ENCODE measurements at regions of chr6 and their contacts with region 1.

Region 1: DNA sequence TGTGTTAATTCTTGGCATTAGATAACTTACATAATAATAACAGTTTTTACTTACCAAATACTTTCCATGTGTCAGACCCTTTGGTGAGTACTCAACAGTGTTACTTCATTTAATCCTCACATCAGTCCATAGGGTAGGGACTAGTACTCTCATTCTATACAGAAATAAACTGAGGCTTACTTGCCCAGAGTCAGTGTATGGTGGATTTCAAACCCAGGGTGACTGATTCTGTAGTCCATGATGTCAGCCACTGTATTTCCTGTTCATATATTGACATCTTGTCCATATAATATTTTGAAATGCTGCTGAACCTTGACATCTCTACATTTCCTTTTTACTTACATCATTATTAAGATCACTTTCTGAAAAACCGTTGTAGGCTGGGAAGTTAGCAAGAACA is 2.5 kb upstream of the PNLDC1 start:
- DNase-seq: no peak
- H3K4me3 ChIP-seq: no peak overlapping the region
- H3K27ac ChIP-seq: no peak overlapping the region
- H3K4me1 ChIP-seq: peaks cover 0 to 2% of the 10 kb centered on the region in 2 donors
- H3K27me3 ChIP-seq: no peaks in the 10 kb centered on the region
- CTCF ChIP-seq: no peak
- POLR2A ChIP-seq: no peak

Region 2: DNA sequence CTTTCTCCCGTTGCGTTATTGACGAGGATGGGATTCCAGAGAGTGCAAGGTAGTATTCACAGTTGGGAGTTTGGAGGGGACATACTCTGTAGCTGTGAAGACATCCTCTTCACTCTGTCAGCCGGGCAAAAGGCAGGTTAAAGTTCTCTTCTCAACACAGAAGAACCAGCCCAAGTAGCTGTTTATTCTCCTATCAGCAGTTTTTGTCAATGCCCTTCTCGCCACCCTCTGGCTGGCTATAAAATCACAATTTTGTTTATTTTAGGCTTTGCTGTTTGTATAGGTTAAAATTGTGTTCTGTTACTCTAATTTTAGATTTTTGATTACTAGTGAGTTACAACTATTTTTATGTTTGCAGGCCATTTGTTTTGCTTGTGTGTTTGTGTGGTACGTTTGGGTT is 55.3 kb after region 1 on chr6:
- intact Hi-C with region 1: loop called in 1 of 2 experiments (anchors 5 kb)
- DNase-seq: no peak
- H3K4me3 ChIP-seq: no peak overlapping the region
- H3K27ac ChIP-seq: no peak overlapping the region
- H3K4me1 ChIP-seq: peaks cover 0 to 9% of the 10 kb centered on the region in 2 donors
- H3K27me3 ChIP-seq: no peaks in the 10 kb centered on the region
- CTCF ChIP-seq: peak in 4 of 6 experiments; percentile 11 to 36 (median 26)
- POLR2A ChIP-seq: no peak

Region 3: GRCh38 chr6:159874435-159874834 is 76.9 kb after region 1 on chr6:
- intact Hi-C with region 1: no loop called
- DNase-seq: peak in 3 of 7 donors; percentile 13 to 31 (median 29)
- H3K4me3 ChIP-seq: no peak overlapping the region
- H3K27ac ChIP-seq: no peak overlapping the region
- H3K4me1 ChIP-seq: no peaks in the 10 kb centered on the region
- H3K27me3 ChIP-seq: no peaks in the 10 kb centered on the region
- CTCF ChIP-seq: no peak
- POLR2A ChIP-seq: no peak

Region 4: DNA sequence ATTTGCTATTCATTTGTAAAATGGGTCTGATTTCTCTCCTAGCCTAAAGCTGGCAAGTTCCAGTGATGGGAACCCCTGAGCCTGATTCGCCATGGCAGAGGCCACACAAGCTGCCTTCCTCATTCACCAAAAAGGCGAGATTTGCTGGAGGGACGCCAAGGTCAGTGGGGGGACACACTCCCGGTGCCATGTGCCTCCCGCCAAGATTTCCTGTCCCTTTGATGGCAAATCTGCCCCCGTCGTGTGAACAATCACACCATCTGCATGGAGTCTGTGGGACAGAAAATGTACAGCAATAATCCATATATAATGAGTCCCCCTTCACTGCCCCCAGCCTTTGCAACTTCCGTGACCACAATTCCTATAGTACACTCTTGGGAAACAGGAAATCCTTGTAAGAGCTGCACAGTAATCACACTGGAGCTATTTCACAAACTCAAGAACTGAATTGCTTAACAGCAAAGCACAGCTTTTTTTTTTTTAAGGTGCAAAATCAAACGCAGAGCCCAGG is 155.6 kb after region 1 on chr6:
- intact Hi-C with region 1: no loop called
- DNase-seq: peak; percentile 54 to 80 (median 70)
- H3K4me3 ChIP-seq: peak overlapping the region in 1 of 4 donors; percentile 4
- H3K27ac ChIP-seq: peak overlapping the region in 3 of 5 donors; percentile 10 to 75 (median 41)
- H3K4me1 ChIP-seq: peaks cover 8 to 25% of the 10 kb centered on the region in 2 donors
- H3K27me3 ChIP-seq: no peaks in the 10 kb centered on the region
- CTCF ChIP-seq: no peak
- POLR2A ChIP-seq: no peak

Measured in adrenal gland (tissue), 19 donors.